T-cell (primary cell): ENCODE measurements at regions of chr12 and their contacts with region 1.

Region 1: GRCh38 chr12:121579981-121580868 is 598 bp downstream of the KDM2B start:
- DNase-seq: peak; percentile 59 to 88 (median 77)
- ATAC-seq: peak; percentile 65 to 73 (median 71)
- H3K4me3 ChIP-seq: peak overlapping the region; percentile 73 to 75
- H3K4me3 Mint-ChIP-seq: peak overlapping the region; percentile 96 to 98 (median 96)
- H3K27ac ChIP-seq: peak overlapping the region; percentile 89
- H3K27ac Mint-ChIP-seq: peak overlapping the region; percentile 98 to 99
- H3K4me1 ChIP-seq: peaks cover 17 to 52% of the 10 kb centered on the region in 2 experiments
- H3K4me1 Mint-ChIP-seq: peaks cover 42 to 52% (median 50%) of the 10 kb centered on the region in 3 donors
- H3K27me3 ChIP-seq: no peaks in the 10 kb centered on the region
- H3K27me3 Mint-ChIP-seq: no peaks in the 10 kb centered on the region

Region 2: DNA sequence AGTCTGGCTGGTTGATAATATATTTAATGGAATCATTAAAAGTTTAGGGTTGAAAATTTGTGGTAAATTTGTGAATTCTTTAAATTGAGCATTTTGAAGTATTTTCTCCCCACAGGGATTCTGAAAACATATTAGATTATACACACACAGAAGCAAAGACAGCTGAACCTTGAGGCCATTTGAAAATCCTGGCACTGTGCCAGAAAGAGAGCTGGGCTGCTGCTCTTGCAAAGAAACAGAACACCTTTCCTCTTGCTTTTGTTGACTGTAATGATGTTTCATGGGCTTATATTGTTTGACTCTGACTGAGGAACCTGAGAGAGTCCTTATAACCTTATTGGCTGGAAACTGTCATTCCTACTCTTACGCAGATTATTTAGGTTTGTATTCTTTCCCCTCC is 175.5 kb before region 1 on chr12:
- CTCF ChIA-PET with region 1: no interaction called
- POLR2A ChIA-PET with region 1: no interaction called
- DNase-seq: peak in 1 of 35 experiments; percentile 33
- ATAC-seq: no peak
- H3K4me3 ChIP-seq: no peak overlapping the region
- H3K4me3 Mint-ChIP-seq: no peak overlapping the region
- H3K27ac ChIP-seq: no peak overlapping the region
- H3K27ac Mint-ChIP-seq: no peak overlapping the region
- H3K4me1 ChIP-seq: peaks cover 12 to 13% of the 10 kb centered on the region in 2 experiments
- H3K4me1 Mint-ChIP-seq: peaks cover 58 to 70% (median 60%) of the 10 kb centered on the region in 3 donors
- H3K27me3 ChIP-seq: no peaks in the 10 kb centered on the region
- H3K27me3 Mint-ChIP-seq: no peaks in the 10 kb centered on the region

Region 3: GRCh38 chr12:121499929-121500793 is 80.1 kb before region 1 on chr12:
- CTCF ChIA-PET with region 1: interaction called, 4 to 17 read pairs
- POLR2A ChIA-PET with region 1: no interaction called
- DNase-seq: peak; percentile 32 to 86 (median 66)
- ATAC-seq: peak; percentile 81 to 88 (median 82)
- H3K4me3 ChIP-seq: no peak overlapping the region
- H3K4me3 Mint-ChIP-seq: no peak overlapping the region
- H3K27ac ChIP-seq: no peak overlapping the region
- H3K27ac Mint-ChIP-seq: peak overlapping the region in 1 of 2 donors; percentile 22
- H3K4me1 ChIP-seq: peaks cover 0 to 36% of the 10 kb centered on the region in 2 experiments
- H3K4me1 Mint-ChIP-seq: peaks cover 9 to 23% (median 23%) of the 10 kb centered on the region in 3 donors
- H3K27me3 ChIP-seq: no peaks in the 10 kb centered on the region
- H3K27me3 Mint-ChIP-seq: no peaks in the 10 kb centered on the region

Region 4: DNA sequence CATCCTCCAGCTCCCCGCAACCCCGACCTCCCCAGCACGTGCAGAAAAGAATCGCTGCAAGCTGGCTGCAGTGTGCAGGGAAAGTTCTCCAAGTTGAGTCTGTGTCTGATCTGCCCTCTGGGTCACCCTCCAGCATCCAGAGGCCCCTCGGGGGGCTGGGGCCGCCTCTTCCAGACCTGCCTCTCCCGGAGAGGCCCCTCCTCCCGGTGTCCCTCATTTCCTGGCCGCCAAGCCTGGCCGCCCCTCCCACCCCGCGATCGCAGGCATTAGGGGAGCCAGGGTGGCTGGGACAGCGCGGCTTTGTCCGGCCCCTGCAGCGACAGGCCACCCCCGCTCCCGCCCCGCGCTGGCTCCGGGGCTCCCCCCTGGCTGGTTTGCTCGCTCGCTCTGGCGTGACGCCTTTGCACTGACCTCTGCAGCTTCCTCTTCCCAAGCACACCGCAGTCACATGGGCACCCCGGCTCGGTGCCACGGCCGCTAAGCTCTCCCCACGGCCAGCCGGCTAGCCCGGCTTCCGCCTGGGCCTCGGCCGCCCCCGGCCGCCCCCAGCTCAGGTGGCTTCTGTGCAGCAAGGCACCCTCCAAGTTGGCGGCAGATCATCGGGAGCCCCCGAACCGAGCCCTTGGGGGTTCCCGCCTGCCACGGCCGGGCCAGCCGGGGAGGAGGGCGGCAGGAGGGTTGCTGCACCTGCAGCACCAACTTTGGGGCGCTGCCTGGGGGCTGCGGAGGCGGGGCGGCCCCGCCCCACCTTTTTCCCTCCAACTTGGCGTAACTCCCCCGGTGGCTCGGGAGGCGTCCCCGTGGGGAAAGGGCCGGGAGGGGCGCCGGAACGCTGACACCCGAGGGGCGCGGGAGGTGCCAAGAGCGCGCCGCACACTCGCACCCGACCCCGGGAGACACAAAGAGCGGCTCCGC is 43.1 kb before region 1 on chr12:
- CTCF ChIA-PET with region 1: interaction called in 1 of 2 experiments, 5 read pairs
- POLR2A ChIA-PET with region 1: interaction called, 4 to 11 read pairs
- DNase-seq: peak in 32 of 35 experiments; percentile 17 to 72 (median 41)
- ATAC-seq: peak; percentile 9 to 35 (median 22)
- H3K4me3 ChIP-seq: peak overlapping the region; percentile 41 to 68
- H3K4me3 Mint-ChIP-seq: peak overlapping the region; percentile 76 to 84 (median 78)
- H3K27ac ChIP-seq: peak overlapping the region; percentile 94
- H3K27ac Mint-ChIP-seq: peak overlapping the region; percentile 96 to 97
- H3K4me1 ChIP-seq: peaks cover 4 to 53% of the 10 kb centered on the region in 2 experiments
- H3K4me1 Mint-ChIP-seq: peaks cover 40 to 52% (median 44%) of the 10 kb centered on the region in 3 donors
- H3K27me3 ChIP-seq: no peaks in the 10 kb centered on the region
- H3K27me3 Mint-ChIP-seq: no peaks in the 10 kb centered on the region

Region 5: GRCh38 chr12:121600702-121601336 is 20.6 kb after region 1 on chr12:
- CTCF ChIA-PET with region 1: no interaction called
- POLR2A ChIA-PET with region 1: interaction called in 1 of 2 experiments, 10 read pairs
- DNase-seq: no peak
- ATAC-seq: no peak
- H3K4me3 ChIP-seq: no peak overlapping the region
- H3K4me3 Mint-ChIP-seq: no peak overlapping the region
- H3K27ac ChIP-seq: no peak overlapping the region
- H3K27ac Mint-ChIP-seq: no peak overlapping the region
- H3K4me1 ChIP-seq: peaks cover 0 to 2% of the 10 kb centered on the region in 2 experiments
- H3K4me1 Mint-ChIP-seq: peaks cover 5 to 11% (median 6%) of the 10 kb centered on the region in 3 donors
- H3K27me3 ChIP-seq: no peaks in the 10 kb centered on the region
- H3K27me3 Mint-ChIP-seq: no peaks in the 10 kb centered on the region

Region 6: GRCh38 chr12:121702957-121703356 is 122.7 kb after region 1 on chr12:
- CTCF ChIA-PET with region 1: no interaction called
- POLR2A ChIA-PET with region 1: no interaction called
- DNase-seq: no peak
- ATAC-seq: no peak
- H3K4me3 ChIP-seq: no peak overlapping the region
- H3K4me3 Mint-ChIP-seq: no peak overlapping the region
- H3K27ac ChIP-seq: no peak overlapping the region
- H3K27ac Mint-ChIP-seq: no peak overlapping the region
- H3K4me1 ChIP-seq: no peaks in the 10 kb centered on the region
- H3K4me1 Mint-ChIP-seq: no peaks in the 10 kb centered on the region
- H3K27me3 ChIP-seq: peaks cover 0 to 12% of the 10 kb centered on the region in 2 experiments
- H3K27me3 Mint-ChIP-seq: peaks cover 0 to 4% of the 10 kb centered on the region in 2 donors

Region 7: GRCh38 chr12:122403115-122403770 is 823.0 kb after region 1 on chr12:
- CTCF ChIA-PET with region 1: no interaction called
- POLR2A ChIA-PET with region 1: no interaction called
- DNase-seq: no peak
- ATAC-seq: no peak
- H3K4me3 ChIP-seq: no peak overlapping the region
- H3K4me3 Mint-ChIP-seq: no peak overlapping the region
- H3K27ac ChIP-seq: no peak overlapping the region
- H3K27ac Mint-ChIP-seq: peak overlapping the region in 1 of 2 donors; percentile 5
- H3K4me1 ChIP-seq: peaks cover 0 to 13% of the 10 kb centered on the region in 2 experiments
- H3K4me1 Mint-ChIP-seq: peaks cover 39 to 44% (median 42%) of the 10 kb centered on the region in 3 donors
- H3K27me3 ChIP-seq: no peaks in the 10 kb centered on the region
- H3K27me3 Mint-ChIP-seq: no peaks in the 10 kb centered on the region